ENCODE measurements at regions of chr19 and their contacts with region 1.

Region 1: GRCh38 chr19:9342610-9343304 is 18.8 kb downstream of the ZNF559 start:
- DNase-seq: no peak
- H3K4me3 ChIP-seq: no peak overlapping the region
- H3K27ac ChIP-seq: no peak overlapping the region
- H3K4me1 ChIP-seq: no peaks in the 10 kb centered on the region
- H3K27me3 ChIP-seq: no peaks in the 10 kb centered on the region
- CTCF ChIP-seq: no peak
- EP300 ChIP-seq: no peak
- POLR2A ChIP-seq: no peak

Region 2: DNA sequence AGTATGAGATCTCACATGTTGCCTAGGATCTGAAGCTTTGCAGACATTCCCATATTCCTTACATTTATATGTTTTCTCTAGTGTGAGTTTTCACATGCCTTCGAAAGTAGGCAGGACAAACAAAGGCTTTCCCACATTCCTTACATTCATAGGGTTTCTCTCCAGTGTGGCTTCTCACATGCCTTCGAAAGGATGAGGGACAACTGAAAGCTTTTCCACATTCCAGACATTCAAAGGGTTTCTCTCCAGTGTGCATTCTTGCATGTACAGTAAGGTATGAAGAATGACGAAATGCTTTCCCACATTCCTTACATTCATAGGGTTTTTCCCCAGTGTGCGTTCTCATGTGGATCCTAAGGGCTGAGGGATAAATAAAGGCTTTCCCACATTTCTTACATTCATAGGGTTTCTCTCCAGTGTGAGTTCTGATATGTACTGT is 47.3 kb before region 1 on chr19:
- intact Hi-C with region 1: loop called in 1 of 4 experiments (anchors 10 kb)
- DNase-seq: no peak
- H3K4me3 ChIP-seq: no peak overlapping the region
- H3K27ac ChIP-seq: no peak overlapping the region
- H3K4me1 ChIP-seq: no peaks in the 10 kb centered on the region
- H3K27me3 ChIP-seq: no peaks in the 10 kb centered on the region
- CTCF ChIP-seq: no peak
- EP300 ChIP-seq: no peak
- POLR2A ChIP-seq: no peak

Region 3: DNA sequence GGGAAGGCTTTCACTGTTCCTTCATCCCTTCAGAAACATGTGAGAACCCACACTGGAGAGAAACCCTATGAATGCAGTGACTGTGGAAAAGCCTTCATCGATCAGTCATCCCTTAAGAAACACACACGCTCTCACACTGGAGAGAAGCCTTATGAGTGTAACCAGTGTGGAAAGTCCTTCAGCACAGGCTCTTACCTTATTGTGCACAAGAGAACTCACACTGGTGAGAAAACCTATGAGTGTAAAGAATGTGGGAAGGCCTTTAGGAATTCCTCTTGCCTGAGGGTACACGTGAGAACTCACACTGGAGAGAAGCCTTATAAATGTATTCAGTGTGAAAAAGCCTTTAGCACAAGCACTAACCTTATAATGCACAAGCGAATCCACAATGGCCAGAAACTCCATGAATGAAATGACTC is 38.6 kb after region 1 on chr19:
- intact Hi-C with region 1: loop called in 1 of 4 experiments (anchors 5 kb)
- DNase-seq: no peak
- H3K4me3 ChIP-seq: no peak overlapping the region
- H3K27ac ChIP-seq: no peak overlapping the region
- H3K4me1 ChIP-seq: no peaks in the 10 kb centered on the region
- H3K27me3 ChIP-seq: no peaks in the 10 kb centered on the region
- CTCF ChIP-seq: no peak
- EP300 ChIP-seq: no peak
- POLR2A ChIP-seq: no peak

Region 4: DNA sequence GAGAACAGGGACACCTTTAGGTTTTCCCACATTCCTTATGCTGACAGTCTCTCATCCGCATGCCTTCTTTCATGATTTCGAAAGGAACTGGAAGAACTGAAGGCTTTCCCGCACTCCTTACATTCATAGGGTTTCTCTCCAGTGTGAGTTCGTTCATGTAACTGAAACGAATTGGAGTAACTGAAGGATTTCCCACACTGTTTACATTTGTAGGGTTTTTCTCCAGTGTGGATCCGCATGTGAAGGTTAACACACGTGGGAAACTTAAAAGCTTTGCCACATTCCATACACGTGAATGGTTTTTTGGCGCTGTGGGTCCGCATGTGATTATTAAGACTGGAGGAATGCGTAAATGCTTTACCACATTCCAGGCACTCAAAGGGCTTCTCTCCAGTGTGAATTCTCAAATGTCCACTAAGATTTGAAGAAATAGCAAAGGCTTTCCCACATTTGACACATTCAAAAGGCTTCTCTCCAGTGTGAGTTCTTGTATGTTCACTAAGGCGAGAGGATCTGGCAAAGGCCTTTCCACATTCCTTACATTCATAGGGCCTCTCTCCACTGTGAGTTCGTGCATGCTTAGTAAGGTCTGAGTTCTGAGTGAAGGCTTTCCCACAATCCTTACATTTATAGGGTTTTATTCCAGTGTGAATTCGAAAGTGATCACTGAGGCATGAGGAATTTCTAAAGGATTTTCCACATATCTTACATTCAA is 70.6 kb after region 1 on chr19:
- intact Hi-C with region 1: no loop called
- DNase-seq: no peak
- H3K4me3 ChIP-seq: no peak overlapping the region
- H3K27ac ChIP-seq: no peak overlapping the region
- H3K4me1 ChIP-seq: no peaks in the 10 kb centered on the region
- H3K27me3 ChIP-seq: no peaks in the 10 kb centered on the region
- CTCF ChIP-seq: no peak
- EP300 ChIP-seq: no peak
- POLR2A ChIP-seq: no peak

Measured in ovary (tissue), 10 donors.